Left ventricle myocardium superior (tissue), 1 donor: ENCODE measurements at regions of chr10 and their contacts with region 1.

Region 1: GRCh38 chr10:80699602-80700039 is 161.9 kb downstream of the SH2D4B start:
- DNase-seq: peak; percentile 87
- ATAC-seq: peak; percentile 90

Region 2: GRCh38 chr10:80356563-80356988 is 343.0 kb before region 1 on chr10 and contains the starts of genes DYDC1 and DYDC2:
- intact Hi-C with region 1: no loop called
- DNase-seq: peak; percentile 73
- ATAC-seq: peak; percentile 88
- total RNA-seq, gene DYDC1: not detected
- total RNA-seq, gene DYDC2: not detected

Region 3: DNA sequence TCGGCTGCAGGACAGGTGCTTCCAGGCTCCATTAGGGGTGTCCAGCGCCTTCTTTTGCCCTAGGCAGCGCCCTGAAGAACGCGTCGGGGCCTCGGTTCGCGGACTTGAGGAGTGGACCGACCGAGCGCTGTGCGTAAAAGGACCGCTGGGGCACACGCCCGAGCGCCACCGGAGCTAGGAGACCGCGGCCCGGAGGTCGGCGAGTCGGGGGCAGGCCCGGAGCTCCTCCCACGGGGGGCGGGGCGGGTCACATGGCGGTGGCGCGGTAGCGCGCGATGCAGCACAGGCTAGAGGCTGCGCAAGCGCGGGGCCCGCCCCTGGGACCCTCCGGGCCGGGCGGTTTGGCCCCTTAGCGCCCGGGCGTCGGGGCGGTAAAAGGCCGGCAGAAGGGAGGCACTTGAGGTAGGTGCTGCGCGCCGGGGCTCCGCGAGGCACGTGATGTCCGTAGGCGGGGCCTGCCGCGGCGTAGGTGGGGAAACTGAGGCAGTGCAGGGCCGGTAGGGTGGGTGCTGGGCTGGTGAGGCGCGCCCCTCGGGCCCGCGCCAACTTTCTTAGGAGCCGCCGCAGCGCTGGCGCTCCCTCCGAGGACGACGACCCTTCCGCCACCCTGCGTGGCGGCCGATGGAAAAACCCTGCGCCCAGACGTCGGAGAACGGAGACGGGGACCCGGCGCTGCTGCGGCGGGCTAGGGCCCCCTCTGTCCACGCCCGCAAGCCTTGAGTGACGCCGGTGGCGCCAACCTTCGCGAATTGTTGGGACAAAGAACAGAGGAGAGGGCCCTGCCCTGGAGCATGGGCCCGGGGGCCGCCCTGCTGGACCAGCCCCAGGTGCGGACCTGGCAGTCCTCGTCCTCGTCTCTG is 291.1 kb before region 1 on chr10 and contains the start of gene PRXL2A:
- intact Hi-C with region 1: no loop called
- DNase-seq: peak; percentile 94
- ATAC-seq: peak; percentile 95
- total RNA-seq, gene PRXL2A: 119 TPM

Region 4: GRCh38 chr10:80917636-80918035 is 218.0 kb after region 1 on chr10:
- intact Hi-C with region 1: loop called (anchors 10 kb)
- DNase-seq: no peak
- ATAC-seq: no peak